ENCODE measurements at regions of chr1 and their contacts with region 1.

Region 1: DNA sequence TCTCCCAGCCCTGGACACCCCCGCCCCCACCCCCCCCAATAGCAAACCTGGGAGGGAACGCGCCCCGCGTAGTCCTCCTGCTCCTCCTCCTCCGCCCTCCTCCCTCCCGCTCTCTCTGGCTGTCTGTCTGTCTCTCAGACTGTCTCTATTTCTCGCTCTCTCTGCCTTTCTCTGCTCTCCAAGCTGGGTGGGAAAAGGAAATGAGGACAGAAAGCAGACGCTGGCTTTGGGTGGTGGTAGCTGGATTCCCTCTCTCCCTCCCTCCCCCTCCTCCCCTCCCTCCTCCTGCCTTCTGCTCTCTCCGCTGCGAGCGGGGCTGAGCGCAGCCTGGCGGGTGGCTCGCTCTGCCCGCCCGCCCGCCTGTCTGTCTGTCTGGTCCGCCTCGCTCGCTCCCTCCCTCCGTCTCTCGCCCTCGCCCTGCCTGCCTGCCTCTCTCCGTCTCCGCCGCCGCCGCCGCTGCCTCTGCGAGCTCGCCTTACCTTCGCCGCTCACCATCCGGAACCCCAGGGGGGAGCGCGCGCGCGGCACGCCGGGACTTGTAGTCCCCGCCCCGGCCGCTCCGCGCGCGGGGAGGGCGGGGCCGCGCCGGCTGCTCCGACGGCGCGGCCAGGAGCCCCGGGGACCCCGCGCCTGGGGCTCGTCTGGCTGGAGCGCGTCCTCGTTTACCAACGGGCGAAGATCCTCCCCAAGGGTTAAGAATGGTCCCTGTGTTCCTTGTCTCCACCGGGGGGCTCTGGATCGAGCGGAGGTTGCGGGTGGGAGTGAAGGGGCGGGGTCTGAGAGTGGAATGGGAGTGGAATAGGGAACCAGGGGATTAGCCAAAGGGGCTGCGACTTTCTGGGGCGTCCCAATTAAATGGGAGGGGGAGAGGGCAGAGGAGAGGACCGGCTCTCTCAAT is at the start of gene AHDC1:
- DNase-seq: no peak
- ATAC-seq: peak; percentile 75
- H3K4me3 ChIP-seq: peak within 1 kb of the TSS; percentile 83
- H3K27ac ChIP-seq: no peak within 1 kb of the TSS; the same call in 1 of the 2 replicates
- H3K4me1 ChIP-seq: peaks cover 40% of the 10 kb centered on the region
- H3K27me3 ChIP-seq: no peaks in the 10 kb centered on the region
- CTCF ChIP-seq: no peak
- EP300 ChIP-seq: no peak
- POLR2A ChIP-seq: peak; percentile 94
- RAD21 ChIP-seq: no peak
- polyA plus RNA-seq, gene AHDC1: 0.21 to 0.26 TPM

Region 2: GRCh38 chr1:27357281-27358037 is 246.5 kb before region 1 on chr1:
- CTCF ChIA-PET with region 1: interaction called, 28 read pairs
- POLR2A ChIA-PET with region 1: interaction called, 3 read pairs
- RAD21 ChIA-PET with region 1: no interaction called
- SMC1A ChIA-PET with region 1: interaction called, 5 read pairs
- in situ Hi-C with region 1: no loop called
- intact Hi-C with region 1: no loop called
- DNase-seq: no peak
- ATAC-seq: peak; percentile 88
- H3K4me3 ChIP-seq: peak overlapping the region; percentile 54; the same call in 1 of the 2 replicates
- H3K27ac ChIP-seq: no peak overlapping the region
- H3K4me1 ChIP-seq: peaks cover 13% of the 10 kb centered on the region
- H3K27me3 ChIP-seq: no peaks in the 10 kb centered on the region; a peak in 1 of 4 replicates
- CTCF ChIP-seq: peak; percentile 90 to 96 (median 93); a peak in 5 of 6 replicates
- EP300 ChIP-seq: no peak
- POLR2A ChIP-seq: no peak
- RAD21 ChIP-seq: peak; percentile 49

Region 3: DNA sequence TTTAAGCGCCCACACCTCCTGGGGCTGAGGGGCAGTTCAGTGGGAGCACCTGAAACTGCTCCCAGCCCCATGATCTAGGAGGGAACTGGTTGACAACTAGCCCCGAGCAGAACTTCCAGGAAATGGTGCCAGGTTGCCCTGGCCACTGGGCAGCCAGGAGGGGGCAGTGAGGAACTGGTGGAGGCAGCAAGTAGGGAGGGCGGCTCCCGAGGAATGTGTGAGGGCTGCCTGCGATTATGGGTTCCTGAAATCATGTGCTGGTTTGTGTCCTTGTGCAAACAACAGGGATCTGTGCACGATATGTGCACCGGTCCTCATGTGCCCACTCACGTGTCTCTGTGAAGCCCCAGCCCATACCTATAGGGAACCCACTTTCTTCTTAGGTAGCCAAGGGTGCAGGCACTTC is 201.6 kb before region 1 on chr1:
- CTCF ChIA-PET with region 1: interaction called, 133 read pairs
- POLR2A ChIA-PET with region 1: interaction called, 9 read pairs
- RAD21 ChIA-PET with region 1: interaction called, 34 read pairs
- SMC1A ChIA-PET with region 1: interaction called, 26 read pairs
- in situ Hi-C with region 1: no loop called
- intact Hi-C with region 1: no loop called
- DNase-seq: no peak
- ATAC-seq: peak; percentile 31
- H3K4me3 ChIP-seq: no peak overlapping the region
- H3K27ac ChIP-seq: no peak overlapping the region
- H3K4me1 ChIP-seq: peaks cover 16% of the 10 kb centered on the region
- H3K27me3 ChIP-seq: no peaks in the 10 kb centered on the region
- CTCF ChIP-seq: peak; percentile 37 to 48 (median 43); a peak in 4 of 6 replicates
- EP300 ChIP-seq: no peak
- POLR2A ChIP-seq: 0 out of 2 replicates have a peak, but pooled peaks have one; percentile 37
- RAD21 ChIP-seq: peak; percentile 55

Region 4: DNA sequence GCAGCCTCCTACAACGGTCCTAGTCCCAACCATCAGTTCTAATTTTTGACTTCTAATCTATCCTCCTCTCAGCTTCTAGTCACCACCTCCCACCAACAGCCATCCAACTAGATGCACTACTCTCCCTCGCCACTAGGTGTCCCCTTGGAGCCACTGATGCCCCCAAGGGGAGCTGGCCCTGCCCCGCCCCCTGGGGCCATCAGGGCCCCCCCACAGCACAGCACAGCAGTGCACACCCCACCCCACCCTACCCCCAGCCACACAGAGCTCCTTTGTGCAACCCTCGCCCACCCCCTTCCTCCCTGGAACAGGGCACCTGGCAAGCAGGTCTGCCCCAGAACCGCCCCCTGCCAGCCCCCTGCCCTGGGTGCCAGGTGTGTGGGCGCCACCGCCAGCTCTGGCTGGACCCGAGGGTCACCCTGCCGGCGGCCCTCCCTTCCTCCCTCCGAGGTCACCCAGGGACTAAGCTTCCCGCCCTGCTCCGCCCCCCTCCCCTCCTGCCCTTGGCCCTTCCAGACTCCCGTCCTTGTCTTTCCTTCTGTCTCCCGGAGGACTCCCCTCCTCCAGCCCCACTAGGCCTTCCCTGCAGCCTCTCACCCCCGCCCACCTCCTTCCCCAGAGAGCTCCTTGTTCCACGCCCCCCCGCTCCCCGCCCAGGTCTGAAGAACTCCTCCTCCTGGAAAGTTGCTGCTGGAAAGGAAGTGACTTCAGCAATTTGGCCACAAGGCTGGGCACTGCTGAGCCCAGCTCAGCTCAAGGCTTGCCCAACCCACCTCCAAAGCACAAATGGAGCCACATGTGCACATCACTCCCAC is 46.9 kb before region 1 on chr1:
- CTCF ChIA-PET with region 1: interaction called, 132 read pairs
- POLR2A ChIA-PET with region 1: interaction called, 6 read pairs
- RAD21 ChIA-PET with region 1: interaction called, 181 read pairs
- SMC1A ChIA-PET with region 1: interaction called, 70 read pairs
- in situ Hi-C with region 1: no loop called
- intact Hi-C with region 1: loop called (anchors 2 kb)
- DNase-seq: no peak
- ATAC-seq: peak; percentile 92
- H3K4me3 ChIP-seq: no peak overlapping the region
- H3K27ac ChIP-seq: no peak overlapping the region
- H3K4me1 ChIP-seq: peaks cover 16% of the 10 kb centered on the region
- H3K27me3 ChIP-seq: no peaks in the 10 kb centered on the region
- CTCF ChIP-seq: peak; percentile 85 to 96 (median 86)
- EP300 ChIP-seq: no peak
- POLR2A ChIP-seq: no peak
- RAD21 ChIP-seq: peak; percentile 85

Region 5: GRCh38 chr1:27634177-27634984 is 30.5 kb after region 1 on chr1:
- CTCF ChIA-PET with region 1: interaction called, 208 read pairs
- POLR2A ChIA-PET with region 1: interaction called, 50 read pairs
- RAD21 ChIA-PET with region 1: interaction called, 183 read pairs
- SMC1A ChIA-PET with region 1: interaction called, 40 read pairs
- in situ Hi-C with region 1: no loop called
- intact Hi-C with region 1: loop called (anchors 1 kb)
- DNase-seq: no peak
- ATAC-seq: peak; percentile 5
- H3K4me3 ChIP-seq: peak overlapping the region; percentile 66
- H3K27ac ChIP-seq: peak overlapping the region; percentile 95
- H3K4me1 ChIP-seq: peaks cover 69% of the 10 kb centered on the region
- H3K27me3 ChIP-seq: no peaks in the 10 kb centered on the region
- CTCF ChIP-seq: no peak
- EP300 ChIP-seq: 0 out of 4 replicates have a peak, but pooled peaks of 1 of the 2 experiments have one; percentile 22
- POLR2A ChIP-seq: peak; percentile 52
- RAD21 ChIP-seq: no peak

Region 6: GRCh38 chr1:27656157-27656893 is 52.4 kb after region 1 on chr1:
- CTCF ChIA-PET with region 1: interaction called, 327 read pairs
- POLR2A ChIA-PET with region 1: interaction called, 67 read pairs
- RAD21 ChIA-PET with region 1: interaction called, 268 read pairs
- SMC1A ChIA-PET with region 1: interaction called, 248 read pairs
- in situ Hi-C with region 1: loop called (anchors 5 kb)
- intact Hi-C with region 1: no loop called
- DNase-seq: no peak
- ATAC-seq: no peak
- H3K4me3 ChIP-seq: no peak overlapping the region
- H3K27ac ChIP-seq: peak overlapping the region; percentile 42; the same call in 1 of the 2 replicates
- H3K4me1 ChIP-seq: peaks cover 61% of the 10 kb centered on the region
- H3K27me3 ChIP-seq: no peaks in the 10 kb centered on the region
- CTCF ChIP-seq: peak; percentile 1 to 21 (median 17); a peak in 1 of 6 replicates
- EP300 ChIP-seq: no peak
- POLR2A ChIP-seq: no peak
- RAD21 ChIP-seq: no peak